H1 (cell line): ENCODE measurements at regions of chr10 and their contacts with region 1.

Region 1: GRCh38 chr10:129971381-129972144 is 7.5 kb upstream of the EBF3 start:
- DNase-seq: peak in 1 of 2 experiments; percentile 76
- H3K4me3 ChIP-seq: peak overlapping the region in 2 of 4 experiments; percentile 7 to 55; a peak in 3 of 8 replicates
- H3K27ac ChIP-seq: no peak overlapping the region
- H3K4me1 ChIP-seq: peaks cover 0 to 28% (median 18%) of the 10 kb centered on the region in 4 experiments; a peak in 6 of 7 replicates
- H3K27me3 ChIP-seq: peaks cover 67 to 93% (median 77%) of the 10 kb centered on the region in 4 experiments
- CTCF ChIP-seq: peak; percentile 36 to 63 (median 51)
- EP300 ChIP-seq: no peak
- POLR2A ChIP-seq: no peak
- RAD21 ChIP-seq: peak; percentile 56 to 80

Region 2: DNA sequence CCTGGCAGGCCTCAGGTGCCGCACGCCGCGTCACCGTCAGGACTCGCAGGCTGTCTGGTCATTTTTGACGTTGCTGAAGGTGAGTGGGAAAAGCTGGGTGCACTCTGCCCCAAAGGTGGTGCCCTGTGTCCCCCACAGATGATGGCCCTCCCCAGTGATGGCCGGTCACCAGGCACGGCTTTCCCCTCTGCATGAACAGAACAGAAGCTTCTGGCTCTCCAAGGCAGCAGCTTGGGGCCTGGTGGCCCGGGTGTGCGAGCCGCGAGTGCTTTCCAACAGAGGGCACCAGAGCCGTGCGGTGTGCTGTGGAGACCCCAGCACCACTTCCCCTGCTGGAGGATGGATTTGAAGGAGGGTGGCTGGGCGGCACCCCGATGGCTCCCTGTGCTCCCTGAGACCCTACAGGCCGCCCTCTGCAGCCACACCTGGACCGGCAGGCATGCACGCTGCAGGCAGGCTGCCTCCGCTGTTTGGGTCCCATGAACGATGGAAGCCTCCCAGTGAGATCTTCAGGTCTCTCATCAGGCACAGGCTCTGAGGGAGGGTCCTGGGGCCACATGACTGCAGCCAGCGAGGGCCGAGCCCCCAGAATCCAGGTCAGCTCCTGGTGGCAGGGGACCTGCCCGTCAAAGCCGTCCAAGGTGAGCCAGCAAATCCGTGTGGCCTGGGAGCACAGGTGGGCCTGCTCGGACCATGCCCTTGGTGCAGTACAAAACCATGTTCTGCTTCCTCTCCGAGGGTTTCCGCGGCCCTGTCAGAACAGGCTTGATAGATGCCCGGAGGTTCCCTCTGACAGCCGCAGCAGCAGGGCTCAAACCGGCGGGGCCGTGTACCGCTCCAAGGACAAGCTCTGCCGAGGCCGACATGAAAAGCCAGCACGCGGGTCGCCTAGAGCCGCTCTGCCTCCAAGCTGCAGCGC is 202.9 kb before region 1 on chr10:
- CTCF ChIA-PET with region 1: interaction called, 11 read pairs
- POLR2A ChIA-PET with region 1: no interaction called
- DNase-seq: peak; percentile 51 to 75
- H3K4me3 ChIP-seq: no peak overlapping the region
- H3K27ac ChIP-seq: no peak overlapping the region
- H3K4me1 ChIP-seq: no peaks in the 10 kb centered on the region; a peak in 1 of 7 replicates
- H3K27me3 ChIP-seq: no peaks in the 10 kb centered on the region
- CTCF ChIP-seq: peak; percentile 76 to 93 (median 81)
- EP300 ChIP-seq: no peak
- POLR2A ChIP-seq: no peak
- RAD21 ChIP-seq: peak; percentile 83 to 88

Region 3: DNA sequence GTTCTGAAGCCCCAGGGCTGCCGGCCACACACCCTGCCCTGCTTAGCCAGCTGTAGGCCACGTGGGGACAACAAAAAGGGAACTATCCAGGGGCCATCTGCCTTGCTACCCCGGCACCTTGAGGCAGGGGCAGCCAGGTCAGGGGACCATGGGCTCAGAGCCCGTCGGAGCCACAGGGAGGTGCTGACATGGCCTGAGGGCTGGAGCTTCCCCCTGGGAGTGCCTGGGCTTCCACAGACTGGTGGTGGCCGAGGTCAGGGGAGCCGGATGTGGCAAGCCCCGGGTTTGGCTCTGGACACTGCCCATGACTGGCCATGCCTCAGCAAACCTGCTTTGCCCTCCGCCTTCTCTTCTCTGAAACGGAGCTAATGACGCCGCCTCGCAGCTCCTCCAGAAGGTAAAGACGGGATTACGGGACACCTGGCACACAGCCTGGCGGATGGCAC is 186.0 kb before region 1 on chr10:
- CTCF ChIA-PET with region 1: interaction called, 10 read pairs
- POLR2A ChIA-PET with region 1: no interaction called
- DNase-seq: no peak
- H3K4me3 ChIP-seq: no peak overlapping the region
- H3K27ac ChIP-seq: no peak overlapping the region
- H3K4me1 ChIP-seq: no peaks in the 10 kb centered on the region
- H3K27me3 ChIP-seq: no peaks in the 10 kb centered on the region
- CTCF ChIP-seq: no peak
- EP300 ChIP-seq: no peak
- POLR2A ChIP-seq: no peak
- RAD21 ChIP-seq: no peak

Region 4: GRCh38 chr10:130045091-130045652 is 73.6 kb after region 1 on chr10:
- CTCF ChIA-PET with region 1: interaction called, 14 read pairs
- POLR2A ChIA-PET with region 1: no interaction called
- DNase-seq: peak; percentile 43 to 77
- H3K4me3 ChIP-seq: no peak overlapping the region
- H3K27ac ChIP-seq: no peak overlapping the region
- H3K4me1 ChIP-seq: peaks cover 0 to 4% (median 0%) of the 10 kb centered on the region in 4 experiments; a peak in 2 of 7 replicates
- H3K27me3 ChIP-seq: peaks cover 0 to 2% (median 0%) of the 10 kb centered on the region in 4 experiments; a peak in 1 of 7 replicates
- CTCF ChIP-seq: peak; percentile 93 to 99 (median 94)
- EP300 ChIP-seq: no peak
- POLR2A ChIP-seq: no peak
- RAD21 ChIP-seq: peak; percentile 76 to 88

Region 5: GRCh38 chr10:130127364-130128061 is 155.9 kb after region 1 on chr10:
- CTCF ChIA-PET with region 1: interaction called, 11 read pairs
- POLR2A ChIA-PET with region 1: no interaction called
- DNase-seq: peak in 1 of 2 experiments; percentile 79
- H3K4me3 ChIP-seq: no peak overlapping the region
- H3K27ac ChIP-seq: no peak overlapping the region
- H3K4me1 ChIP-seq: peaks cover 2 to 4% (median 3%) of the 10 kb centered on the region in 4 experiments; a peak in 4 of 7 replicates
- H3K27me3 ChIP-seq: peaks cover 0 to 4% (median 2%) of the 10 kb centered on the region in 4 experiments; a peak in 1 of 7 replicates
- CTCF ChIP-seq: peak; percentile 73 to 90 (median 77)
- EP300 ChIP-seq: no peak
- POLR2A ChIP-seq: no peak
- RAD21 ChIP-seq: peak; percentile 65 to 74